ENCODE measurements at regions of chr11 and their contacts with region 1.

Region 1: DNA sequence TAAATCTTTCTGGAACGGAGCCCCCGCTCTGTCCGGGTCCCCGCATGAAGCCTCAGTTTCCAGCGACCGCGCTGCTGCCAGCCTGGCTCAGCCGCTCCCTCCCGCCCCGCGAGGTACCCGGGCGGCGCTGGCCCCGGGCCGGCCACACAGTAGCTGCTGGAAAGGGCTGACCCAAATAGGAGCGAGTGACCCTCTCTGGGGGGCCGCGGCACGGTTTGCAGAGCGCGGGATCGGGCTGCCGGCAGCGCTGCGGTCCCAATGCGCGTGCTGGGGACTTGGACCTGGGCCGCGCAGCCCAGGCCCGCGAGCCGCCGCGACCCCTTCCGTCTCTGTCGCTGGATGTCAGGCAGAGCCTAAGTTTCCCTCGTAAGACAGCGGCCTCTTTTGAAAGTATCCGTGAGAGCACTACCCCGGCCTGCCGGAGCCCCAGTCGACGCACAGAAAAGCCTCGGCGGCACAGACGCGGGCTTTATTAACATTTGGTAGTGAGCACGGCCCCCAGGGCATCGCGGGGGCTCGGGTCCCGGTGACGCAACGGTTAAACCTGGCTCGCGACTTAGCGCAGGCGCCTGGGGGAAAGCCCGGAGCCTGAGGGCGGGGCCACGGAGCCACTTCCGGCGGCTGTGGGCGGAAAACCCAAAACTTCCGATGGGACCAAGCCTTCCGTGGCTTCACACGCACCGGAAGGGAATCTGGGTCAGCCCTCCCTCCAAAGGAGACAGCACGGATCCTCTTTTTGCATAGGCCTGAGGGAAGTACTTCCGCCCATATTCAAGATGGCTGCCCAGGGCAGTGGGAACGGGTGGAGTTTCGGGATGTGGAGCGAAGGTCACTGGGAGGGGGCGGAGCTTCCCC is 14.9 kb downstream of the BAD start:
- DNase-seq: peak; percentile 95 to 99
- H3K4me3 ChIP-seq: peak overlapping the region; percentile 77 to 97 (median 79)
- H3K27ac ChIP-seq: peak overlapping the region; percentile 95 to 100
- H3K4me1 ChIP-seq: peaks cover 6 to 25% of the 10 kb centered on the region in 2 donors
- H3K27me3 ChIP-seq: no peaks in the 10 kb centered on the region
- CTCF ChIP-seq: peak in 1 of 3 donors; percentile 18
- POLR2A ChIP-seq: no peak

Region 2: GRCh38 chr11:62269650-62270278 is 1999.8 kb before region 1 on chr11 and contains the start of gene SCGB2A2:
- intact Hi-C with region 1: loop called (anchors 10 kb)
- DNase-seq: peak; percentile 63 to 74
- H3K4me3 ChIP-seq: peak within 1 kb of the TSS in 2 of 3 donors; percentile 40 to 45
- H3K27ac ChIP-seq: peak within 1 kb of the TSS; percentile 51 to 80
- H3K4me1 ChIP-seq: no peaks in the 10 kb centered on the region
- H3K27me3 ChIP-seq: no peaks in the 10 kb centered on the region
- CTCF ChIP-seq: peak; percentile 22 to 49 (median 26)
- POLR2A ChIP-seq: no peak
- total RNA-seq, gene SCGB2A2: 1.4 to 2,173 (median 715) TPM

Region 3: DNA sequence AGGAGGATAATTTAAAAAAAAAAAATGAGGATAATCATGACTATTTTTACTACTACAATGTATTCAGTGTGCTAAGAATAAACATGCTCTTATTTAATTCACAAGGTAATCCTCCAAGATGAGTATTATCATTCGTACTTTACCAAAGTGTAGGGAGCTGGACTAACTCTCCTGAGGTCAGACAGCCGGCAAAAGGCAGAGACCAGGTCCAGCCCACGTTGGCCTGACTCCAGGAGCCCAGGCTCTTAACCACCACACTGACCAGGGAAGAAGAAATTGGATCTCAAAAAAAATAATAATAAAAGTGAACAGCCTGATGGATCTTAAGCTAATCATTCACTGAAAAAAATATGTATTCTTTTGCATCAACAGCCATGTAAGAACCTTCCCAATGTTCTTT is 680.6 kb before region 1 on chr11:
- intact Hi-C with region 1: loop called (anchors 5 kb)
- DNase-seq: peak in 1 of 2 donors; percentile 15
- H3K4me3 ChIP-seq: no peak overlapping the region
- H3K27ac ChIP-seq: no peak overlapping the region
- H3K4me1 ChIP-seq: no peaks in the 10 kb centered on the region
- H3K27me3 ChIP-seq: no peaks in the 10 kb centered on the region
- CTCF ChIP-seq: no peak
- POLR2A ChIP-seq: no peak

Region 4: GRCh38 chr11:64240394-64241174 is 29.0 kb before region 1 on chr11 and contains the start of gene FKBP2:
- intact Hi-C with region 1: no loop called
- DNase-seq: peak; percentile 96 to 98
- H3K4me3 ChIP-seq: peak within 1 kb of the TSS; percentile 83 to 92 (median 87)
- H3K27ac ChIP-seq: peak within 1 kb of the TSS; percentile 100
- H3K4me1 ChIP-seq: peaks cover 4 to 13% of the 10 kb centered on the region in 2 donors
- H3K27me3 ChIP-seq: no peaks in the 10 kb centered on the region
- CTCF ChIP-seq: no peak
- POLR2A ChIP-seq: peak; percentile 81
- total RNA-seq, gene FKBP2: 51.4 to 77.3 (median 54.6) TPM

Region 5: DNA sequence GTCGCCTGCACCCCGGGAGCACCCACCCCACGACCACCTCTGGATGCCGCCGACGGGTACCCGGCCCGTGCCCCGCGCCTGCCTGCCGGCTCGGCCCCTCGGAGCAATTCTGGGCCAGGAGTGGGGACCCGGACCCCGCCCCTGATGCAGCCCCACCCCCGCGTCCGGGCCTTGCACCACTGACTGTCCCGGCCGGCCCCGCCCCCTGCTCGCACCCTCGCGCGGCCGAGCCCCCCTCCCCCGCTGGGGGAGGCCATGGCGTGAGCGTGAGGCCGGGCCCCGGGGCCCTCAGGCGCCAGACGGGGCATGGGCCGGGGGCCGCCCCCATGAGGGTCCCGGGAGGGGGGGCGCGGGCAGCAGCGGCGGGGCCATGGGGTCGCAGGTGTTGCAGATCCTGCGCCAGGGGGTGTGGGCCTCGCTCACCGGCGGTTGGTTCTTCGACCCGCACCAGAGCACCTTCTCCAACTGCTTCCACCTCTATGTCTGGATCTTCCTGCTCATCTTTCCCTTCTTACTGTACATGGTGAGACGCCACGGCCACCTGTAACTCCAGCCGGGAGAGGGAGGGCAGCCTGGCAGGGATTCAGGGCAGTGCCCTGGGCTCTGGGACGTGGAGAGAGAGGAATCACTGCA is 1346.5 kb after region 1 on chr11:
- intact Hi-C with region 1: no loop called
- DNase-seq: no peak
- H3K4me3 ChIP-seq: peak overlapping the region; percentile 95 to 97 (median 97)
- H3K27ac ChIP-seq: peak overlapping the region; percentile 93 to 97
- H3K4me1 ChIP-seq: peaks cover 11 to 29% of the 10 kb centered on the region in 2 donors
- H3K27me3 ChIP-seq: no peaks in the 10 kb centered on the region
- CTCF ChIP-seq: no peak
- POLR2A ChIP-seq: no peak